ENCODE measurements at regions of chr5 and their contacts with region 1.

Region 1: DNA sequence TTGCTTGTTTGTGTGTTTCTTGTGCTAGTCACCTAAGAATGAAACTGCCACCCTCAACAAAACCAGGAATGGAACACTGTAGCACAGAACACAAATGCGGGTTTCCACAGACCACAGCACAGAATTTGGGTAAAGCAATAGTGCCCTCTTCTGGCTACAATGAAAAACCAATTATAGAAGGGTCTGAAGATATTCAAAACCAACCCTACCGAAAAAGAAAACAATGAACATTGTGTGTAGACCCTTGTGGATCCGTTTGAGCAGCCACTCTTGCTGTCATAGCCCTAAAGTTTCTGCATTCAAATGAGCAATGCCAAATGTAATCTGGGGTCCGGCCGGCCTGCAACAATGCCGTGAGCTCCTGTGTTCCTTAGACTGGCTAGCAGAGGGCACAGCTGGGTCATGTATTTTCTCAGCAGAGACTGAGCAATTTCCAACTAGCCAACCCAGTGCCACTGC is 8.3 kb upstream of the ENC1 start:
- DNase-seq: no peak
- ATAC-seq: peak; percentile 95

Region 2: GRCh38 chr5:73902327-73903051 is 746.4 kb before region 1 on chr5:
- intact Hi-C with region 1: loop called (anchors 2 kb)
- DNase-seq: no peak
- ATAC-seq: peak; percentile 58

Region 3: DNA sequence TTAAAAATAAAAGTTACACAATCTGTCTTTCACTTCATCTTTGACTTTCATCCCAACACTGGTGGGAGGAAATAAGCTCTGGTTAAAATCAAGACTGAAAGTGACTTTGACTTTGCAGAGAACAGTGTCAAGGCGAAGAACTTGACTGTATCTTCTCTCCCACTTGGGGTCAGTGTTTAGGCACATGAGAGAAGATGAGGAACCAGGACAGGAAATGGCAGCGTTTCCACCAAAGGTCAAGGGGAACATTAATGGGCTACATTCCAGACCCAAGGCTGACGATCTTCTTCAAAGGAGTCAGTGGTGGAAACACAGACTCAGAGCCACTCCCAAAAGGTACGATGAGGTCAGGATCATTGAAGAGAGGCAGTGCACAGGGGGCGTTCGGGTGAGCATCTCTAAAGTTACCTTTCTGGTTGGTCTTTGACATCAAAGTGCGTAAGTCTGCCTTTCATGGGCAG is 613.3 kb before region 1 on chr5:
- intact Hi-C with region 1: loop called (anchors 5 kb)
- DNase-seq: no peak
- ATAC-seq: peak; percentile 80

Region 4: DNA sequence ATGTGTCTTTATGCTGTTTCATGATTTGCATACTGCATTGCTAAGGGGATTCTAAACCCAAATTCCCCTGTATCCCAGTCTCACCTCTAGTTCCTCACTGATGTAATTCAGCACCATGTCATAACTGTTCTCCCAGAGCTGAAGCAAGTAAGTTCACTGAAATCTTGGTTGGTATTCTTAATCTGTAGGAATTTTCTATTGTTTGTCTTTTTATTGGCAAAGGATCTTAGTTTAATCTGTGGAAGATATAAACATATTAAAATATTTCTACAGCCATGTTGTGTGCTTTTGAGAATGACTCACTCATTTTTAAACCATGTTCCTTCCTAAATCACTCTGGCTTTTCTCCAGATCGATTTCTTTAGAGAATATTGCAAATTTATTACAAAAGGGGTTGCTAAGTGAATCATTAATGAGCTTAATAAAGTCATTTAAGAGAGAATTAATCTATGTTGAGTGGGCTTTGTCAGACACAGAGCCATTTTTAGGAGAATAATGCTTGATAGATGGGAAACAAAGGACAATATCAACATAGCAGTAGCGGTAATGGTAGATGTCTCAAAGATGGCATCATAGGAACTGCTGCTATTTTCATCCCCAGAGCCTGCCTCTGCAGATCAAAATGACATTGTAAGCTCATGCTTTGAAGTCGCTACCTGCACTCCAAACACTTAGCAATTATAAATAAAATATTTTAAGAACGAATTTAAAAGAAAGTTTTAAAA is 118.4 kb before region 1 on chr5:
- intact Hi-C with region 1: no loop called
- DNase-seq: no peak
- ATAC-seq: no peak

Region 5: DNA sequence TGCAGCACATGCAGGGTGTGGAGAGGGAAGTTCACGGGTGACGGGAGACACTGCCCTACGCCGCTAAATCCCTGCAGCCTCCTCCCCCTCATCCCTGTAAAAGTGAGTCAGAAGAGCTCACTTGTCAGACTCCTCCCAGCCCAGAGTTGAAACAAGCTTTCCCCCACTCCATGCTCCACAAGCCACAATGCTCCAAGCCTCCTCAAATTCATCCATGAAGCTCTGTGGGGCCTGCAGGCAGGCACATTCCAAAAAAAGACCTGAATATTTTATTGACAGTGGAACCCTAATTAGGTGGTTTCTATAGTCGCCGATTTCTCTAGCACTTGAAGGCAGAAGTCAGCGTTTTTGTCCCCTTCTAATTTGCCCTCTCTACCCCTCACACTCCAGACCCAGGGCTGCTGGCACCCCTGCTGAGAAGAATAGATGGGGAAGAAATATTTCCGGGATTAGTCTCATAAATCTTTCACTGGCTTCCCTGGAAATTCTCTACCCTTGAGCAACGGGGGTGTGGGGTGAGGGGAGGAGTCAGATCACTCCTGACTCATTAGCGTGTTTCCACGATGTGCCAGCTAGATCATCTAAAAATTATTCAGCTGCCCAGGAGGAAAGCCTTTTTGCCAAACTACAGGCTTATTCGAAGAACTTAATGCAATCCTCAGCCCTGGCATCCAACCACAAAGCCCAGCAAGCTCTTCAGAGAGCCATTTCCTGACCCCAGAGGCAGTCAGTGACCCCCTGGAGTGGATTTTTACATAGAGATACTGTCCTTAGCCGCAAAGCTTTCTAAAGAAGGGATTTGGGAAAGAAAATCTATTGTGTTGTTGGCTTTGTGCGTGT is 105.5 kb before region 1 on chr5:
- intact Hi-C with region 1: no loop called
- DNase-seq: no peak
- ATAC-seq: no peak

Region 6: GRCh38 chr5:74556631-74557595 is 92.0 kb before region 1 on chr5:
- intact Hi-C with region 1: no loop called
- DNase-seq: no peak
- ATAC-seq: no peak